H1 (cell line): ENCODE measurements at regions of chr17 and their contacts with region 1.

Region 1: GRCh38 chr17:19270689-19271611 is 33.8 kb downstream of the EPN2 start:
- DNase-seq: no peak
- H3K4me3 ChIP-seq: no peak overlapping the region
- H3K27ac ChIP-seq: no peak overlapping the region
- H3K4me1 ChIP-seq: no peaks in the 10 kb centered on the region
- H3K27me3 ChIP-seq: no peaks in the 10 kb centered on the region
- CTCF ChIP-seq: peak; percentile 22 to 46 (median 27); a peak in 3 of 4 replicates
- EP300 ChIP-seq: no peak
- POLR2A ChIP-seq: no peak
- RAD21 ChIP-seq: peak in 1 of 2 experiments; percentile 15; a peak in 1 of 4 replicates

Region 2: GRCh38 chr17:18921912-18922451 is 349.0 kb before region 1 on chr17:
- CTCF ChIA-PET with region 1: no interaction called
- POLR2A ChIA-PET with region 1: no interaction called
- DNase-seq: no peak
- H3K4me3 ChIP-seq: no peak overlapping the region
- H3K27ac ChIP-seq: no peak overlapping the region
- H3K4me1 ChIP-seq: no peaks in the 10 kb centered on the region
- H3K27me3 ChIP-seq: no peaks in the 10 kb centered on the region
- CTCF ChIP-seq: no peak
- EP300 ChIP-seq: no peak
- POLR2A ChIP-seq: no peak
- RAD21 ChIP-seq: no peak

Region 3: GRCh38 chr17:19248144-19248927 is 22.6 kb before region 1 on chr17:
- CTCF ChIA-PET with region 1: interaction called, 12 read pairs
- POLR2A ChIA-PET with region 1: interaction called, 3 read pairs
- DNase-seq: no peak
- H3K4me3 ChIP-seq: no peak overlapping the region
- H3K27ac ChIP-seq: no peak overlapping the region
- H3K4me1 ChIP-seq: peaks cover 0 to 3% (median 2%) of the 10 kb centered on the region in 4 experiments; a peak in 2 of 7 replicates
- H3K27me3 ChIP-seq: no peaks in the 10 kb centered on the region
- CTCF ChIP-seq: no peak
- EP300 ChIP-seq: no peak
- POLR2A ChIP-seq: no peak
- RAD21 ChIP-seq: no peak

Region 4: GRCh38 chr17:19254651-19255050 is 16.3 kb before region 1 on chr17:
- CTCF ChIA-PET with region 1: interaction called, 22 read pairs
- POLR2A ChIA-PET with region 1: interaction called, 4 read pairs
- DNase-seq: no peak
- H3K4me3 ChIP-seq: no peak overlapping the region
- H3K27ac ChIP-seq: no peak overlapping the region
- H3K4me1 ChIP-seq: peaks cover 0 to 8% (median under 1%) of the 10 kb centered on the region in 4 experiments; a peak in 2 of 7 replicates
- H3K27me3 ChIP-seq: no peaks in the 10 kb centered on the region
- CTCF ChIP-seq: no peak
- EP300 ChIP-seq: no peak
- POLR2A ChIP-seq: no peak
- RAD21 ChIP-seq: no peak

Region 5: DNA sequence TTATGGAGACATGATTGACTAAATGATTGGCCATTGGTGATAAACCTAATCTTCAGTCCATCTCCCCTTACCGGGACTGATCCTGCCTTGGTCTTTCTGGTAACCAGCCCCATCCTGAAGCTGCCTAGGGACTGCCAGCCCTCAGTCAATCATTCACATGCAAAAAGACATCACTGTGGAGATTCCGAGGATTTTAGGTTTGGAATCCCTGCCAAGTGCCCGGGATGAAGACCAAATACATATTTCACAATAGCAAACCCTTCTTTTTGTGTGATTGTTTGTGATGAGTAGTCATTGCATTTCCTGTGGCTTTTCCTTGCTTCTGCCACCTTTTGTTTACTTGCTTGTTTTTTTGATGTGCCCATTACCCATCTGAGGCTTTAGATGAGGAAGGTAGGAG is 10.2 kb after region 1 on chr17:
- CTCF ChIA-PET with region 1: interaction called, 14 read pairs
- POLR2A ChIA-PET with region 1: interaction called, 8 read pairs
- DNase-seq: no peak
- H3K4me3 ChIP-seq: no peak overlapping the region; a peak in 1 of 8 replicates
- H3K27ac ChIP-seq: no peak overlapping the region
- H3K4me1 ChIP-seq: peaks cover 1 to 14% (median 9%) of the 10 kb centered on the region in 4 experiments; a peak in 5 of 7 replicates
- H3K27me3 ChIP-seq: no peaks in the 10 kb centered on the region
- CTCF ChIP-seq: no peak
- EP300 ChIP-seq: no peak
- POLR2A ChIP-seq: no peak
- RAD21 ChIP-seq: no peak

Region 6: GRCh38 chr17:19321481-19322128 is 50.7 kb after region 1 on chr17:
- CTCF ChIA-PET with region 1: interaction called, 12 read pairs
- POLR2A ChIA-PET with region 1: interaction called, 4 read pairs
- DNase-seq: no peak
- H3K4me3 ChIP-seq: no peak overlapping the region
- H3K27ac ChIP-seq: no peak overlapping the region
- H3K4me1 ChIP-seq: peaks cover 0 to 16% (median 8%) of the 10 kb centered on the region in 4 experiments; a peak in 6 of 7 replicates
- H3K27me3 ChIP-seq: no peaks in the 10 kb centered on the region
- CTCF ChIP-seq: peak; percentile 38 to 61 (median 56)
- EP300 ChIP-seq: no peak
- POLR2A ChIP-seq: no peak
- RAD21 ChIP-seq: peak in 1 of 2 experiments; percentile 40; a peak in 3 of 4 replicates